ENCODE measurements at regions of chr5 and their contacts with region 1.

Region 1: DNA sequence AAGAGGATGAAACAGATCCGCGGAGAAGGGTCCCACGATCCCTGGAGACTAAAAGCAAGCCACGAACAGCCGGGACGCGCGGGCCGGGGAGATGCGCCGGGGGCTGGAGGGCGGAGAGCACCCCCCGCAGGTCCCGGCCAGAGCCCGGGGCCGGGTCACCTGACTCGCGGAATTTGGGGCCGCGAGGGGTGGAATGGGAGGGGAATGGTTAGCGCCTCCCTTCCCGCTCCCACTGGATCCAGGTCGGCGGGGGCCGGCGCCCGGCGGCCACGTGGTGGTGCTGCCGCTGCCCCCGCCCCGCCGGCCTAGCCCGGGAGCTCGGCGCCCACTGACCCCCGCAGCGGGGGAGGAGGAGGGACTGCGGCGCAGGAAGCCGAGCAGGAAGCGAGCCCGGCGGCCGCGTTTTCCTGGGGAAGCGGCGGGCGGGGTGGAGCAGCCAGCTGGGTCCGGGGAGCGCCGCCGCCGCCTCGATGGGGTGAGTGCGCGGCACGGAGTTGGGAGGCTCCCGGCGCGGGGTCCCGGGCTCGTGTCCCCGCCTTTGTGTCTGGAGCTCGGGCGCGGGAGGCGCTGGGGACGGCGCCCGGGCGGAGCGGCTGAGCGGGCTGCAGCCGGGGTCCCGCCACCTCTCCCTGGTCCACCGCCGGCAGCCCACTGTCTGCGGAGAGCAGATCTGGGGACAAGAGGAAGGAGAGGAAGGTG is at the start of gene RAI14:
- DNase-seq: peak; percentile 86
- ATAC-seq: peak; percentile 71
- H3K4me3 ChIP-seq: peak within 1 kb of the TSS; percentile 97
- H3K27ac ChIP-seq: peak within 1 kb of the TSS; percentile 89
- H3K4me1 ChIP-seq: peaks cover 37% of the 10 kb centered on the region
- H3K27me3 ChIP-seq: no peaks in the 10 kb centered on the region
- CTCF ChIP-seq: no peak
- total RNA-seq, gene RAI14: 54.4 and 73.5 TPM in 2 replicates

Region 2: DNA sequence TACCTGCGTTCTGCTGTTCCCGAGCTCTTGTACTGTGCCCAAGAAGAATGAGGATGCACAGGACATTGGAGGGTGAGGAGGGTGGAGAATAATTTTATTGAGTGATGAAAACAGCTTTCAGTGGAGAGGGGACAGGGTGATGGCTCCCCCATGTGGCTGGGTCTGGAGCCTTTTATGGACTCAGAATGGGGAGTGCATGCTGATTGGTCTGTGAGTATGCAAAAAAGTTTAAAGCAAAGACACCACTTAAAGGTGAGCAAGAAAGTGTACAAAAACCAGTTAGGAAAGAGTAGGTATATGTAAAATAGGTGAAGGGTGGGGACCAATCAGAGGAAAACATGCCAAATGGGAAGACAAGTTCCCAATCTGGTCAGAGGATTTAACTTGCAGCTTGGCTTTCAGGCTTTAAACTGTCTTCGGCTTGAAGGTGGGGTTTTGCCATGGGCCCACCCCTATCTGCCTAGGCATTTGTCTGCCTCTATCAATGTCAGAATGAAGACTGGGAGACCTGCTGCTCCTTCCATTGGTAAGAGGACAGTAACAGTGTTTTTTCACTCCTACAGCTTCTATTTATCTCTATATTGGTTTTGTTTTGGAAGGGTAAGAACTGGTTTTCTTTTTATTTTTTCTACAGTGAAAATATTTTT is 118.0 kb before region 1 on chr5:
- CTCF ChIA-PET with region 1: interaction called, 3 read pairs
- POLR2A ChIA-PET with region 1: no interaction called
- intact Hi-C with region 1: loop called (anchors 5 kb)
- DNase-seq: peak; percentile 43
- ATAC-seq: no peak
- H3K4me3 ChIP-seq: no peak overlapping the region
- H3K27ac ChIP-seq: no peak overlapping the region; the same call in 1 of the 2 replicates
- H3K4me1 ChIP-seq: peaks cover 40% of the 10 kb centered on the region
- H3K27me3 ChIP-seq: no peaks in the 10 kb centered on the region
- CTCF ChIP-seq: peak; percentile 60

Region 3: DNA sequence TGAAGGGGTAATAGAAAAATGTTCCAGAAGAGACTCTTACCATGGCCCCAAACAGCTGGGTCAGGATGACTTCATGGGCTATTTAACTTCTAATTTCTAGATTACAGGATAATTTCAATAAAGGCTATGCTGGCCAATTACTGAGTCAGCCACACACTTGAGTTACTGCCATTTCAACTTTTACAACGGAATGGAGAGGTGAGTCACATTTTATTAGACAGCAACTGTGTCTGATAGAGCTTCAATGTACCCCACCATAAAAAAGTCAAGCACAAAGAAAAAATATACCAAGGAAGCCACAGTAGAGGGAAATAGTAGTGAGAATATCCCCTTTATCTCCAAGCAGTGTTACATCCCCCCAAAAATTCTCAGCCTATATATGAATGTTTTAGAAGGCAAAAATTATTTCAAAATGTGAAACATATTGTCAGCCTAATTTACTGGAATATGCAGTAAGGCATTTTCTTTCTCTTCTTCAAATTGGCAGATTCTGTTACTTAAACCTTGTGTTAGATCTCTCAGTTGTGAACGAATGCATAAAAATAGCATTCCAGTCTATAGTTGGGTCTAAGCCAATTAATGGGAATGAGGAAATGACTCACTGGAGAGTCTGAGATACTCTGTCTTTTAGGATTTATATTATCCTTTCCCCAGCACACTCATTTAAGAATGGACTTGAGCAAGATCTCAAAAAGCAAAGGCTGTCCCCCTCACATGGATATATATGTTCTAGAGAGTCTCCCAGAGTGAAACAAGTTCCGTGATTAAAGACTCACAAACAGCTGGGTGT is 47.1 kb before region 1 on chr5:
- CTCF ChIA-PET with region 1: interaction called, 3 read pairs
- POLR2A ChIA-PET with region 1: interaction called, 3 read pairs
- intact Hi-C with region 1: loop called (anchors 1 kb)
- DNase-seq: peak; percentile 92
- ATAC-seq: peak; percentile 72
- H3K4me3 ChIP-seq: peak overlapping the region; percentile 19; the same call in 1 of the 2 replicates
- H3K27ac ChIP-seq: peak overlapping the region; percentile 95
- H3K4me1 ChIP-seq: peaks cover 43% of the 10 kb centered on the region
- H3K27me3 ChIP-seq: no peaks in the 10 kb centered on the region
- CTCF ChIP-seq: no peak

Region 4: GRCh38 chr5:34838785-34839714 is 182.9 kb after region 1 on chr5 and contains the start of gene TTC23L:
- CTCF ChIA-PET with region 1: no interaction called
- POLR2A ChIA-PET with region 1: no interaction called
- intact Hi-C with region 1: loop called (anchors 5 kb)
- DNase-seq: peak; percentile 90
- ATAC-seq: peak; percentile 95
- H3K4me3 ChIP-seq: peak within 1 kb of the TSS; percentile 72
- H3K27ac ChIP-seq: peak within 1 kb of the TSS; percentile 11
- H3K4me1 ChIP-seq: peaks cover 4% of the 10 kb centered on the region; the same call in 1 of the 2 replicates
- H3K27me3 ChIP-seq: no peaks in the 10 kb centered on the region
- CTCF ChIP-seq: no peak
- total RNA-seq, gene TTC23L: 0.84 TPM in 1 of 2 replicates, not detected in the other

Region 5: GRCh38 chr5:34898258-34898895 is 242.2 kb after region 1 on chr5:
- CTCF ChIA-PET with region 1: interaction called, 4 read pairs
- POLR2A ChIA-PET with region 1: no interaction called
- intact Hi-C with region 1: loop called (anchors 5 kb)
- DNase-seq: peak; percentile 80
- ATAC-seq: peak; percentile 96
- H3K4me3 ChIP-seq: no peak overlapping the region
- H3K27ac ChIP-seq: no peak overlapping the region
- H3K4me1 ChIP-seq: peaks cover 14% of the 10 kb centered on the region
- H3K27me3 ChIP-seq: no peaks in the 10 kb centered on the region
- CTCF ChIP-seq: peak; percentile 93